ENCODE measurements at regions of chr1 and their contacts with region 1.

Region 1: GRCh38 chr1:31923901-31924535 is 14.2 kb downstream of the PTP4A2 start:
- DNase-seq: no peak
- H3K4me3 ChIP-seq: peak overlapping the region; percentile 7
- H3K4me3 Mint-ChIP-seq: peak overlapping the region; percentile 74 to 93 (median 80)
- H3K27ac ChIP-seq: no peak overlapping the region
- H3K27ac Mint-ChIP-seq: peak overlapping the region; percentile 86 to 96 (median 90)
- H3K4me1 ChIP-seq: peaks cover 76% of the 10 kb centered on the region
- H3K4me1 Mint-ChIP-seq: peaks cover 77 to 88% (median 87%) of the 10 kb centered on the region in 3 donors
- H3K27me3 ChIP-seq: no peaks in the 10 kb centered on the region
- H3K27me3 Mint-ChIP-seq: no peaks in the 10 kb centered on the region

Region 2: DNA sequence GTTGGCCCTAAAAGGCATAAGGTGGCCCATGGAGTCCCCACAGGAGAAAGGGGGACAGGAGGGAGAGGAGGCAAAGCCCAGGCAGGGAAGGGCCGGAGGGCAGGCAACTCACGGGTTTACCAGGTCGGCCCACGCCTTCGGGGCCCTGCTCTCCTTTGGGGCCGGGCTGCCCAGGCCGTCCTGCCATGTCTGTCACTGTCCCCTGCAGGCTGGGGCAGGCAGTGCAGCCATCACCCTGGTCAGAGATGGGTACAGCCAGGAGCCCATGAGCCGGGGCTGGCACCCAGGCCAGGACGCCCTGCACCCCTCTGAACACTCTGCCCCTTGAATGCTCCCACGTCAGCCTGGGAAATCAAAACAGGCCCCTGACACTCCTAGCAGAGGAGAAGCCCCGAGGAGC is 240.0 kb before region 1 on chr1:
- CTCF ChIA-PET with region 1: no interaction called
- POLR2A ChIA-PET with region 1: no interaction called
- DNase-seq: peak in 1 of 5 donors; percentile 4
- H3K4me3 ChIP-seq: no peak overlapping the region
- H3K4me3 Mint-ChIP-seq: no peak overlapping the region
- H3K27ac ChIP-seq: no peak overlapping the region
- H3K27ac Mint-ChIP-seq: no peak overlapping the region
- H3K4me1 ChIP-seq: no peaks in the 10 kb centered on the region
- H3K4me1 Mint-ChIP-seq: no peaks in the 10 kb centered on the region
- H3K27me3 ChIP-seq: peaks cover 5% of the 10 kb centered on the region
- H3K27me3 Mint-ChIP-seq: peaks cover 9 to 40% of the 10 kb centered on the region in 2 donors

Region 3: DNA sequence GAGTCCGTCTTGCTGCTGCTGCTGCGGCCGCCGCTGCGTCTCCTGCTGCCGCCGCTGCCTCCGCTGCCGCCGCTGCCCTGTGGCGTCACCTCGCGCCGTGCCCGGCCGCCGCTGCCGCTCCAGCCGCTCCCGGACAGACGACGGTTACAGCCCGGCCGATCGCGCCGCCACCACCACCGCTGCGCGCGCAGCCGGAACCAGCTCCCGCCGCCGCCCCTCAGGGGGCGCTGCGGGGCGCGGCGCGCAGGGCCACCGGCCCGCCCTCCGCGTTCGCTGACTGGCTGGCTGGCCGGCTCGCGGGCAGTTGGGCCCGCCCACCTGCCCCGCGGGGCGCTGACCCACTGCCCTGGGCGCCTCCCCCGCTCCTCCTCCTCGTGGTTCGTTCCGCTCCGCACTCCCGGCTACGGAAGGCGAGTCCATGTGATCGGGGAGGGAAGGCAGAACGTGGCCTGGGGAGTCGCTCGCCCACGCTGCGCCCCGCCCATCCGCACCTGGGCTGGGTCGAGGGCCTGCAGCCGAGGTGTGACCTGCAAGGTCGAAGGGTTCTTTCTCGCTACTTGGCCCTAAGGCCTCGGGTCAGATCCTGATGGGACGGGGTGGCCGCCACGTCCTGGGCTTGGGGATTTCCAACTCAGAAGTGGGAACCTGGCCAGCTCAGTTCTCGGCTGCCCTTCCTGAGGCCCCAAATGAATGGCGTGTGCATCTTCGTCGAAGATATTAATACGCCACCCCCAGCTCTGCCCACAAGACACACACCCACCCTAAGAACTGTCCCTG is 14.3 kb after region 1 on chr1 and contains the start of gene PTP4A2:
- CTCF ChIA-PET with region 1: interaction called, 21 read pairs
- POLR2A ChIA-PET with region 1: interaction called, 20 read pairs
- DNase-seq: peak; percentile 75 to 85 (median 80)
- H3K4me3 ChIP-seq: peak within 1 kb of the TSS; percentile 83
- H3K4me3 Mint-ChIP-seq: peak within 1 kb of the TSS; percentile 86 to 100 (median 97)
- H3K27ac ChIP-seq: peak within 1 kb of the TSS; percentile 77
- H3K27ac Mint-ChIP-seq: peak within 1 kb of the TSS; percentile 90 to 99 (median 96)
- H3K4me1 ChIP-seq: peaks cover 77% of the 10 kb centered on the region
- H3K4me1 Mint-ChIP-seq: peaks cover 72 to 79% (median 75%) of the 10 kb centered on the region in 3 donors
- H3K27me3 ChIP-seq: no peaks in the 10 kb centered on the region
- H3K27me3 Mint-ChIP-seq: no peaks in the 10 kb centered on the region
- total RNA-seq, gene PTP4A2: 339 to 368 TPM

Region 4: DNA sequence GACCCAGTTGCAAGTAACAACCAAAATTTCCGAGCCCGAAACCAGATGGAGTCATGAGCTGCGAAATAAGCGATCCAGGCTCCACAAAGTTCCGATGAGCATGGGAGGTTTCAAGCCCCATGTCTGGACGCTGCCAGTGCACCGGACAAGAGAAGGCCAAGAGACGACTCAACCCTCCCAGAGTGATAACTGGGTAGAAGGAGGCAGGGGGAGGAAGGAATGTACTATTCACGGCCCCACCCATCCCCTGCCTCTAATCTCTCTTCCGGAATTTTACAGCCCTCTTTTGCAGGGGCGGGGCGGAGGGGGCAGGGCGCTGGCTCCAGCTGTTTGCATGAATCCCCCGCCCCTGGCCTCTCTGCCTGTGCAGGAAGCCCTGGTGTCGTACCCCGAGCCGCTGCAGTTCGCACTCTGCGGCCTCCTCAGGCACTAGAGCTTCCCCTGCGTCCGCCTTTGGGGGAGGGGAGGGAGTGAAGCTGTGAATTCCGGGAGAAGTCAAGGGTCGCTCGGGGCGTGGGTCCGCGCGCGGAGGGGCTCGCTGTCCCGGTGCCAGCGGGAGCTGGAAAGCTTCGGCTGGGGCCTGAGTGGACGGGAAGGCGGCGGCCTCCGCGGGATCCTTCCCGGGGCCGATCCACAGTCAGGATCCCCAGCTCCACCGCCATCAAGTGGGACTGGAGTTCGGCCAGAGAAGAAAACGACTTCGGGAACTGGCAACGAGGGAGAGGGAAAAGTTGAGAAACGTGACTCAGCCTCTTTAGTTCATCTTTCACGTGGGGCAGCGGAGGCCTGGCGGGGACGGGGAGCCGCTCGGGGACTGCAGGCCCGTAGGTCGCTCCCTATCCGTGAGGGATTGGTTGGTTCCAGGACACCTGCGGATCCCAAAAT is 20.4 kb after region 1 on chr1:
- CTCF ChIA-PET with region 1: interaction called, 21 read pairs
- POLR2A ChIA-PET with region 1: interaction called, 20 read pairs
- DNase-seq: peak; percentile 66 to 90 (median 77)
- H3K4me3 ChIP-seq: peak overlapping the region; percentile 68
- H3K4me3 Mint-ChIP-seq: peak overlapping the region; percentile 83 to 91 (median 85)
- H3K27ac ChIP-seq: peak overlapping the region; percentile 91
- H3K27ac Mint-ChIP-seq: peak overlapping the region; percentile 82 to 95 (median 92)
- H3K4me1 ChIP-seq: peaks cover 58% of the 10 kb centered on the region
- H3K4me1 Mint-ChIP-seq: peaks cover 46 to 67% (median 60%) of the 10 kb centered on the region in 3 donors
- H3K27me3 ChIP-seq: no peaks in the 10 kb centered on the region
- H3K27me3 Mint-ChIP-seq: no peaks in the 10 kb centered on the region

Measured in CD8-positive, alpha-beta memory T cell (primary cell).